Activated CD4-positive, alpha-beta T cell treated with anti-CD3 and anti-CD28 coated beads for 36 hours (primary cell): ENCODE measurements at regions of chr1 and their contacts with region 1.

Region 1: DNA sequence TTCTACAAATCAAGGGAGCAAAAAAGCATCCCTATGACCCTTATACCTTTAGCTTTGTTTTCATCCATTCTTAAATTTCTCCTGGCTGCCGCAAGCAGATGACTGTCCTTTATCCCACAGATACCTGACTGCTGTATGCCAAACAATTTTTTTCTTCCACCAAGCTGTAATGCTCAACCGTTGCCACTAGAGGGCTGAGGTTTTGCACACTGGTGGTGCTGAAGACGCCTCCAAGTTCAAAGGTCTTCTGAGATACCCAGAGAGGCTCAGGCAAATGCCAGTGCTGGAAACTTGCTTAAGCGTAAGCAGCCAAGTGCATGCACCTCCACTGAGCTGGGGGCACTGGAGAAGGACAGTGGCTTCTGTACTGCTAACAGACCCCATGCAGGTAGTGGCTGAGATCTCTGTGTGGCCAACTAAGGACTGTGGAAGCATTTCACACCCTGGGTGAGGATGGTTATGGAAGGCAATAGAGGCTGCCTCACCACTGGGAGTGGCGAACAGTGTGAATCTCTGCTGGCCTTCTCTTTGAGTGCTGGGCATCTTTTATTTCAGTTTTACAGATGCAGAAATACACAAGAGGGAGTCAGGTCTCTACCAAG is 28.5 kb downstream of the CNIH3 start:
- DNase-seq: peak; percentile 74
- ATAC-seq: peak; percentile 85
- H3K4me3 Mint-ChIP-seq: no peak overlapping the region
- H3K27ac Mint-ChIP-seq: no peak overlapping the region
- H3K4me1 Mint-ChIP-seq: no peaks in the 10 kb centered on the region
- H3K27me3 Mint-ChIP-seq: no peaks in the 10 kb centered on the region

Region 2: GRCh38 chr1:224521904-224522734 is 122.5 kb before region 1 on chr1:
- CTCF ChIA-PET with region 1: no interaction called
- POLR2A ChIA-PET with region 1: no interaction called
- intact Hi-C with region 1: no loop called
- DNase-seq: no peak
- ATAC-seq: no peak
- H3K4me3 Mint-ChIP-seq: no peak overlapping the region
- H3K27ac Mint-ChIP-seq: no peak overlapping the region
- H3K4me1 Mint-ChIP-seq: no peaks in the 10 kb centered on the region
- H3K27me3 Mint-ChIP-seq: no peaks in the 10 kb centered on the region

Region 3: GRCh38 chr1:224623743-224624333 is 20.8 kb before region 1 on chr1:
- CTCF ChIA-PET with region 1: interaction called, 5 read pairs
- POLR2A ChIA-PET with region 1: no interaction called
- intact Hi-C with region 1: loop called in 1 of 2 experiments (anchors 1 kb)
- DNase-seq: peak; percentile 87
- ATAC-seq: peak; percentile 92
- H3K4me3 Mint-ChIP-seq: peak overlapping the region; percentile 45
- H3K27ac Mint-ChIP-seq: peak overlapping the region; percentile 96
- H3K4me1 Mint-ChIP-seq: peaks cover 25% of the 10 kb centered on the region
- H3K27me3 Mint-ChIP-seq: peaks cover 25% of the 10 kb centered on the region

Region 4: GRCh38 chr1:224783129-224783651 is 138.5 kb after region 1 on chr1:
- CTCF ChIA-PET with region 1: no interaction called
- POLR2A ChIA-PET with region 1: no interaction called
- intact Hi-C with region 1: no loop called
- DNase-seq: no peak
- ATAC-seq: no peak
- H3K4me3 Mint-ChIP-seq: no peak overlapping the region
- H3K27ac Mint-ChIP-seq: no peak overlapping the region
- H3K4me1 Mint-ChIP-seq: peaks cover 19% of the 10 kb centered on the region
- H3K27me3 Mint-ChIP-seq: no peaks in the 10 kb centered on the region

Region 5: GRCh38 chr1:224851210-224851847 is 206.7 kb after region 1 on chr1:
- CTCF ChIA-PET with region 1: interaction called, 6 read pairs
- POLR2A ChIA-PET with region 1: no interaction called
- intact Hi-C with region 1: loop called (anchors 1 to 2 kb)
- DNase-seq: peak; percentile 77
- ATAC-seq: peak; percentile 60
- H3K4me3 Mint-ChIP-seq: no peak overlapping the region
- H3K27ac Mint-ChIP-seq: no peak overlapping the region
- H3K4me1 Mint-ChIP-seq: no peaks in the 10 kb centered on the region
- H3K27me3 Mint-ChIP-seq: peaks cover 2% of the 10 kb centered on the region

Region 6: GRCh38 chr1:224922404-224923164 is 277.9 kb after region 1 on chr1:
- CTCF ChIA-PET with region 1: interaction called, 10 read pairs
- POLR2A ChIA-PET with region 1: no interaction called
- intact Hi-C with region 1: loop called (anchors 1 to 2 kb)
- DNase-seq: no peak
- ATAC-seq: peak; percentile 57
- H3K4me3 Mint-ChIP-seq: no peak overlapping the region
- H3K27ac Mint-ChIP-seq: no peak overlapping the region
- H3K4me1 Mint-ChIP-seq: no peaks in the 10 kb centered on the region
- H3K27me3 Mint-ChIP-seq: peaks cover 8% of the 10 kb centered on the region